ENCODE measurements at regions of chr4 and their contacts with region 1.

Region 1: GRCh38 chr4:168162604-168163003 is 70.3 kb downstream of the ANXA10 start:
- DNase-seq: no peak
- ATAC-seq: no peak
- H3K4me3 ChIP-seq: no peak overlapping the region
- H3K27ac ChIP-seq: no peak overlapping the region
- H3K4me1 ChIP-seq: peaks cover 10% of the 10 kb centered on the region
- H3K27me3 ChIP-seq: no peaks in the 10 kb centered on the region
- CTCF ChIP-seq: no peak
- EP300 ChIP-seq: no peak
- POLR2A ChIP-seq: no peak
- RAD21 ChIP-seq: no peak

Region 2: GRCh38 chr4:168177546-168178149 is 15.0 kb after region 1 on chr4:
- CTCF ChIA-PET with region 1: no interaction called
- POLR2A ChIA-PET with region 1: no interaction called
- in situ Hi-C with region 1: no loop called
- intact Hi-C with region 1: loop called (anchors 2 kb)
- DNase-seq: peak; percentile 50
- ATAC-seq: peak; percentile 79
- H3K4me3 ChIP-seq: no peak overlapping the region
- H3K27ac ChIP-seq: no peak overlapping the region
- H3K4me1 ChIP-seq: peaks cover 8% of the 10 kb centered on the region; the same call in 1 of the 2 replicates
- H3K27me3 ChIP-seq: no peaks in the 10 kb centered on the region
- CTCF ChIP-seq: no peak
- EP300 ChIP-seq: no peak
- POLR2A ChIP-seq: no peak
- RAD21 ChIP-seq: no peak

Region 3: DNA sequence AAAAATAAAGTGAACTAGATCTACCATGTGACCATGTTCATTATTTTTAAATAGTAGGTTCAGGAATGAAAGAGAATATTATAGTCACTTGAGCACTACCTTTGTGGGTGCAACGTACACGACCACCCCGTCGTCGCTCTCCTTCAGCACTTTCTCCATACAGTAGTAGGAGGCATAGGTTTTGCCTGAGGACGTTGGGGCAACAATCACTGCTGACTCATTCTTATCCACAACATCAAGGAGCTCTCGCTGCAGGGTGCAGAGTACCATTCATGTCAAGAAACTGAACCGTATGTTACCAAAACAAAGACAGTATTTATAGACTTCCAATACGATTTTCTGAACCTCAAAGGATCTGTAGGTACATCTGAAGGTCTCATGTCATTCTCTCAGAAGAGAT is 111.2 kb after region 1 on chr4:
- CTCF ChIA-PET with region 1: no interaction called
- POLR2A ChIA-PET with region 1: no interaction called
- in situ Hi-C with region 1: no loop called
- intact Hi-C with region 1: no loop called
- DNase-seq: no peak
- ATAC-seq: no peak
- H3K4me3 ChIP-seq: no peak overlapping the region
- H3K27ac ChIP-seq: no peak overlapping the region
- H3K4me1 ChIP-seq: no peaks in the 10 kb centered on the region
- H3K27me3 ChIP-seq: no peaks in the 10 kb centered on the region
- CTCF ChIP-seq: no peak
- EP300 ChIP-seq: no peak
- POLR2A ChIP-seq: no peak
- RAD21 ChIP-seq: no peak

Region 4: DNA sequence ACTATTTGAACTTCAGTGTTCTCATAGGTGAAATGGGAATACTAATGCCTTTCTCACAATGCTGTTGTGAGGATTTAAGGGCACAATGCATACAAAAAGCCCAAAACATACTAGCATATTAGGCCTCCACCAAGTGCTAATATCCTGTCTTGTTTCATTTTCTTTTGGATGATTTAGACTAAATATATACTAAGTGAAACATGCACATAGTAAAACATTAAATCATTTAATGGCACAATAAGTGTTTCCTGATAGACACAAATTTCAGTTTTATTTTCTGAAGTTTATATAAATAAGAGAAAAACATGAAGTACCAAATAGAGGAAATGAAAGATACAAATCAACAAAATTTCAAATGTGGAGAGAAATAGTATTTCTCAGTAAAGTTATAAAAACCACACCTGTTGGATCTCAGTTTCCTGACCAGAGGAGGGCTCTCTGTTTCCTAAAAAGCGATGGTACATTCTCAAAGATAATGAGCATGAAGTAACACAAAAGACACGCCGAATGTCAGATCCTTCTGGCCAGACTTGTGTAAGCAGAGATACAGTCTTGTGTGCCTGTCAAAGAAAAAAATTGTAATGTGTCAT is 130.9 kb after region 1 on chr4:
- CTCF ChIA-PET with region 1: no interaction called
- POLR2A ChIA-PET with region 1: no interaction called
- in situ Hi-C with region 1: no loop called
- intact Hi-C with region 1: no loop called
- DNase-seq: no peak
- ATAC-seq: no peak
- H3K4me3 ChIP-seq: no peak overlapping the region
- H3K27ac ChIP-seq: no peak overlapping the region
- H3K4me1 ChIP-seq: no peaks in the 10 kb centered on the region
- H3K27me3 ChIP-seq: no peaks in the 10 kb centered on the region
- CTCF ChIP-seq: no peak
- EP300 ChIP-seq: no peak
- POLR2A ChIP-seq: no peak
- RAD21 ChIP-seq: no peak

Region 5: DNA sequence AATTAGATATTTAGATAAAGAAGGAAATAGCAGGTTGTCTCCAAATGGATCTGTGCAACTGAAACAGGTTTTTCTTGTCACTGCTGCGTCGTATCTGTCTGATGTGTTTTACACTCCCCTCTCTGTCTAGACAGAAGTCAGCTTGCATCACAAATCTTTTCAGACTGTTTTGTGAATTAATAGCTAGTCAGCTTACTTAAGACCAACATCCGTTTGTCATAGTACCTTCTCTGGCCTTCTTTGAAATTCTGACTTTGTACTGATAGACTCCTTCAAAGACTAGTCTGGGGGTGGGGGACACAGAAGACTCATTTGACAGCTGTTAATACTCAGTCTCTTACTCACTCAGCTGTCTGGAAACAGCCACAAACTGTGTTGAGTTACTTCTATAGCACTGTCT is 532.0 kb after region 1 on chr4:
- CTCF ChIA-PET with region 1: no interaction called
- POLR2A ChIA-PET with region 1: no interaction called
- in situ Hi-C with region 1: no loop called
- intact Hi-C with region 1: no loop called
- DNase-seq: no peak
- ATAC-seq: no peak
- H3K4me3 ChIP-seq: no peak overlapping the region
- H3K27ac ChIP-seq: no peak overlapping the region
- H3K4me1 ChIP-seq: peaks cover 7% of the 10 kb centered on the region
- H3K27me3 ChIP-seq: no peaks in the 10 kb centered on the region
- CTCF ChIP-seq: no peak
- EP300 ChIP-seq: no peak
- POLR2A ChIP-seq: no peak
- RAD21 ChIP-seq: no peak